Activated CD4-positive, alpha-beta T cell treated with anti-CD3 and anti-CD28 coated beads, Interleukin-2, amount 10 ng/mL, durations not matched to agents 24 days and 14 days (primary cell): ENCODE measurements at regions of chrX and their contacts with region 1.

Region 1: DNA sequence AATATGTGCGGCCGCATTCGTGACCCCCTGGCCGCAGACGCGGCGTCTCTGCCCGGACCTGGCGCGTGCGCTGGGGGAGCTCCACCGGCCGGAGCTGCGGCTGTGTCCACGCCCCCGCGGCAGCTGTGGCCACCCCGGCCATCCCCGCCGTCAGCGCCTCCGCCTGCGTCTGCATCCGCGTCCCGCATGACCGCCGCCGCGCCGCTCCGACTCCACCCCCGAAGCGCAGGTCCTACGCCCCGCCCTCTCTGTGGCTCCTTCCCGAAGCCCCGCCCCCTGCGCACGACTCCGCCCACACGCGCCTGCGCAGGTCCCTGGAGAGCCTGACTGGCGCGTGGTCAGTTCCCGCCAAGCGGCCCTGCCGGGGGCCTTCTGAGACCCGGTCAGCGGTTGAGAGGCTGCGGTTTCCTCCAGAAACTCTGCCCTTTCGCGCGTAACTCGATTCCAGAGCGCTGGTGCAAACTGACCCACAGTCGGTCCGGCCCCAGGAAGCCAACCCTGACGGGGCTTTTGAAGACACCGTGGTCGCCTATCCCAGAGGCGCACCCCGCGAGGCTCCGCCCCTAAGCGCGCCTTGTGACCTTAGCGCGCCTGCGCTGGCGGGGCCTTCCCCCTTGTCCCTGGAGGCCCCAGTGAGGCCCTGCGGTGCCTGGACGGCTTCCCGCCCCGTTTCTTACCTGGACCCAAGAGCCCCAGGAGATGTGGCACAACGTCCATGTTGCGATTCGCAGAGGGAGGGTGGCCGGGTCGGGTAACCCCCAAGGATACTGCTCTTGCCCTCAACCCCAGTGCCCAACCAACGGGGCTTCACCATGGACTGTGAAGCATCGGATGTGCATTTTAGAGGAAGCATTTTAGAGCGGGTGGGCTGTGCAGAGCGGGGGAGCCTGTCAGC is at the start of gene LAGE3:
- DNase-seq: peak; percentile 99
- H3K4me3 Mint-ChIP-seq: peak within 1 kb of the TSS; percentile 96
- H3K27ac Mint-ChIP-seq: peak within 1 kb of the TSS; percentile 93
- H3K4me1 Mint-ChIP-seq: peaks cover 20% of the 10 kb centered on the region
- H3K27me3 Mint-ChIP-seq: no peaks in the 10 kb centered on the region
- total RNA-seq, gene LAGE3: 53.0 and 53.1 TPM in 2 replicates

Region 2: GRCh38 chrX:154397819-154398724 is 80.9 kb before region 1 on chrX and contains the start of gene RPL10:
- intact Hi-C with region 1: loop called (anchors 5 kb)
- DNase-seq: peak; percentile 97
- H3K4me3 Mint-ChIP-seq: peak within 1 kb of the TSS; percentile 92
- H3K27ac Mint-ChIP-seq: peak within 1 kb of the TSS; percentile 100
- H3K4me1 Mint-ChIP-seq: peaks cover 11% of the 10 kb centered on the region
- H3K27me3 Mint-ChIP-seq: no peaks in the 10 kb centered on the region
- total RNA-seq, gene RPL10: 2,338 and 2,364 TPM in 2 replicates

Region 3: DNA sequence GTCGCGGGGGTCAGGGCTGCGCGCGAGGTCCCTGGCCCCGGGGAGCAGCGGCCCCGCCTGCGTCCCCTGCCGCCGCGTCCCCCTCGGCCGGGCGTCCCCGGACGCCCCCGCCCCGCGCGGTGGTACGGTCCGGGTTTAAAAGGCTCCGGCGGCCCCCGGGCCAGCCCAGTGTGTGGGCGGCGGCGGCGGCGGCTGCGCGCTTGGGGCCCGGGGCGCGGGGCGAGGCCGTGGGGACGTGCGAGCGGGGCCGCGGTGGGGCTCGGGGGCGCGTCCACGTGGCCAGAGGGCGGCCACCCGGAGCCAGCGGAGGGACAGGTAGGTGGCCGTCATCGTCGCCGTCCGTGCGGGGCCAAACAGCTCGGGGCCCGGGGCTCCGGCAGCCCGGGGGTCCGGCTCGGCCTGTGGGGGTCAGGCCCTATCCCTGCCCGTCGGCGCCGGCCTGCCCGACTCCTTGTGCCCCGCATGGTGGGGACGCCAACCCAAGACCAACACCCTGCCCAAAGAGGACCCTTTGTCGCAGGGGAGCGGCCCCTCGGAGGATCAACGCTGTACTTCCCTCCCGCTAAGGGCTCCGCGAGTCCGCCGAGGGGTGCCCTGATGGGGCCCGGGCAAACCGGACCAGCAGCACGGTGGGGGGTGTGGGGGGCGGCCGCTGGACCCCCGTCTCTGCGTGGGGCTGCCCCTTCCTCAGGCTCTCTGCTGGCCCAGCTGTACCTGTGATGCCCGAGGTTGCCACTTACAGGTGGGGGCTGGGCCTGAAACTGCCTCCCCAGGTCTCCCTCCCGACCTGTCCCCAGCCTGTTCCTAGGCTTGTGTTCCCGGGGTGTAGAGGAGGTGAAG is 20.6 kb before region 1 on chrX and contains the start of gene PLXNA3:
- intact Hi-C with region 1: loop called (anchors 1 kb)
- DNase-seq: peak; percentile 89
- H3K4me3 Mint-ChIP-seq: peak within 1 kb of the TSS; percentile 93
- H3K27ac Mint-ChIP-seq: peak within 1 kb of the TSS; percentile 96
- H3K4me1 Mint-ChIP-seq: peaks cover 6% of the 10 kb centered on the region
- H3K27me3 Mint-ChIP-seq: no peaks in the 10 kb centered on the region
- total RNA-seq, gene PLXNA3: 48.3 and 55.9 TPM in 2 replicates

Region 4: GRCh38 chrX:154515878-154516655 is 37.1 kb after region 1 on chrX and contains the start of gene FAM3A:
- intact Hi-C with region 1: loop called (anchors 2 kb)
- DNase-seq: peak; percentile 97
- H3K4me3 Mint-ChIP-seq: peak within 1 kb of the TSS; percentile 90
- H3K27ac Mint-ChIP-seq: peak within 1 kb of the TSS; percentile 93
- H3K4me1 Mint-ChIP-seq: peaks cover 23% of the 10 kb centered on the region
- H3K27me3 Mint-ChIP-seq: no peaks in the 10 kb centered on the region
- total RNA-seq, gene FAM3A: 36.5 and 38.0 TPM in 2 replicates